Caco-2 (cell line): ENCODE measurements at regions of chr15 and their contacts with region 1.

Region 1: GRCh38 chr15:82540055-82540983 is at the start of gene RPS17:
- DNase-seq: peak; percentile 93 to 97
- H3K4me3 ChIP-seq: peak within 1 kb of the TSS; percentile 79
- H3K4me3 Mint-ChIP-seq: peak within 1 kb of the TSS; percentile 81
- H3K27ac Mint-ChIP-seq: peak within 1 kb of the TSS; percentile 88
- H3K4me1 ChIP-seq: peaks cover 12% of the 10 kb centered on the region
- H3K4me1 Mint-ChIP-seq: peaks cover 10% of the 10 kb centered on the region
- H3K27me3 ChIP-seq: no peaks in the 10 kb centered on the region
- H3K27me3 Mint-ChIP-seq: no peaks in the 10 kb centered on the region
- CTCF ChIP-seq: peak; percentile 93 to 95
- total RNA-seq, gene RPS17: 1,992 and 2,047 TPM in 2 replicates

Region 2: DNA sequence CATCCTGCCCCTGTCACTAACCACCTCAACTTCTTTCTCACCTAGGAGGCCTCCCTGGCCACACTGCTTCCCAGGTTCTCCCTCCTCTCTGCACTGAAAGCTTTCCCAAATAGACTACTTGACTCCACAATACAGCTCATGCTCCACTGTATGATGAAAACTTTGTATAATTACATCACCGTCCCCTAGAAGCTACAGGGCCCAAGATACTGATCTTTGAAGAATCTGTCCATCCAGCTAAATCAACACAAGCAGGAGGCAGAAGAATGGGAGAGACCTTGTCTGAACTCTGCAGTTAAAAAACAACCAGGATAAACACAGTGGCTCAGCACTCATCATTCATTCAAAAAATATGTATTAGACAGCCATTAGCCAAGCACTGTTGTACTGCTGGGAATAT is 26.4 kb after region 1 on chr15:
- CTCF ChIA-PET with region 1: interaction called, 5 read pairs
- POLR2A ChIA-PET with region 1: interaction called, 13 read pairs
- intact Hi-C with region 1: loop called (anchors 1 kb)
- DNase-seq: peak; percentile 40 to 63
- H3K4me3 ChIP-seq: no peak overlapping the region
- H3K4me3 Mint-ChIP-seq: peak overlapping the region; percentile 45
- H3K27ac Mint-ChIP-seq: peak overlapping the region; percentile 97
- H3K4me1 ChIP-seq: peaks cover 18% of the 10 kb centered on the region
- H3K4me1 Mint-ChIP-seq: peaks cover 31% of the 10 kb centered on the region
- H3K27me3 ChIP-seq: no peaks in the 10 kb centered on the region
- H3K27me3 Mint-ChIP-seq: no peaks in the 10 kb centered on the region
- CTCF ChIP-seq: no peak

Region 3: GRCh38 chr15:82999905-83000671 is 459.8 kb after region 1 on chr15:
- CTCF ChIA-PET with region 1: no interaction called
- POLR2A ChIA-PET with region 1: no interaction called
- intact Hi-C with region 1: loop called (anchors 2 kb)
- DNase-seq: peak in 1 of 2 experiments; percentile 19
- H3K4me3 ChIP-seq: no peak overlapping the region
- H3K4me3 Mint-ChIP-seq: no peak overlapping the region
- H3K27ac Mint-ChIP-seq: no peak overlapping the region
- H3K4me1 ChIP-seq: no peaks in the 10 kb centered on the region
- H3K4me1 Mint-ChIP-seq: no peaks in the 10 kb centered on the region
- H3K27me3 ChIP-seq: no peaks in the 10 kb centered on the region
- H3K27me3 Mint-ChIP-seq: no peaks in the 10 kb centered on the region
- CTCF ChIP-seq: peak; percentile 10 to 15